HCT116 (cell line): ENCODE measurements at regions of chr7 and their contacts with region 1.

Region 1: DNA sequence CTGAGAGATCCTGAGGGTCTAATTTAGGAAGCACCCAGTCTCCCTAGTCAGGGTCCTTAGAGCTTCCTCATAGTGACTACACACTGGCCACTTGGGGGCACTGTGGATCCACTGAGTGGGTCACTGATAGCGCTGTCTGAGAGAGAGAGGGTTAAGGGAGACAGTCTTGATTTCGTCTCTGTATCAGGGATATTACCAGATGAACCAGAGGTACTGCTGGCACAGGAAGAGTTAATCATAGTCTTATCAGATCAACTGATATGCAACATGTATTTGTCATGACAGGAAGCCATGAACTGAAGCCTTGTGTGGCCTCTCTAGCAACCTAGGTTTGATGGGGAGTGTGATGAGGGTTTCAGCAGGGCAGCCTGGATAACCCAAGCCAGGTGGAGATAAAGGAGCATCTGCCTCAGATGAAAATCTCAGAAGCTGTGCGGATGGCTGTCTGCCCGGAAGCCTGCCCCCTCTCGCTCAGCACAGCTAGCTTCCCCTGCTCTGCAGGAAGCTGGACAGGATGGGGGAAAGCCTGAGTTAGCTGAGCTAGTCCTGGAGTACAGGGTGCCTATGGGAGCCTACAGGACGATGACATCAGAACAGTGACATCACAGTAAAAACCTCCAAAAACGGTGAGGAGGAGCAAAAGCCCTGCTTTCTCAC is 214.0 kb upstream of the PRSS1 start:
- DNase-seq: peak; percentile 76
- ATAC-seq: peak; percentile 100
- H3K4me3 ChIP-seq: no peak overlapping the region
- H3K27ac ChIP-seq: no peak overlapping the region
- H3K4me1 ChIP-seq: peaks cover 3 to 17% of the 10 kb centered on the region in 2 experiments; a peak in 3 of 4 replicates
- H3K27me3 ChIP-seq: no peaks in the 10 kb centered on the region
- CTCF ChIP-seq: peak; percentile 89 to 96 (median 90)
- POLR2A ChIP-seq: no peak
- RAD21 ChIP-seq: peak; percentile 96

Region 2: DNA sequence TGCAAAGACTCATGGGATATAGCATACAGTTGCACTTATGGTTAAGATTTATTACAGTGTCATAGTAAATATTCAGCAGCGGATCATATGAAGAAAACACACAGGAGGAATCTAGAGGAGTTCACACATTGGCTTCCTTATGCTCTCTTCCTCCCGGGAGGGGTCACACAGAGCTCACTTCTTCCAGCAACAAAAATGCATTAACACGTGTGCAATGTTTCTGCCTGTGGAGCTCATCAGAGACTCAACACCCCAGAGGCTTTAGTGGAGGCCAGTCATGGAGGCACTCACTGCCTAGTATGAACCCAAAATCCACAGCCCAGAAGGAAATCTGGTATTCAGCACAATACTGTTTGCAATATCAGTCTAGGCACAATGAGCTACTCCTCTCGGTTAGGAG is 11.2 kb after region 1 on chr7:
- CTCF ChIA-PET with region 1: interaction called, 15 read pairs
- POLR2A ChIA-PET with region 1: no interaction called
- RAD21 ChIA-PET with region 1: no interaction called
- intact Hi-C with region 1: no loop called
- DNase-seq: no peak
- ATAC-seq: no peak
- H3K4me3 ChIP-seq: no peak overlapping the region
- H3K27ac ChIP-seq: no peak overlapping the region
- H3K4me1 ChIP-seq: no peaks in the 10 kb centered on the region
- H3K27me3 ChIP-seq: no peaks in the 10 kb centered on the region
- CTCF ChIP-seq: no peak
- POLR2A ChIP-seq: no peak
- RAD21 ChIP-seq: no peak

Region 3: DNA sequence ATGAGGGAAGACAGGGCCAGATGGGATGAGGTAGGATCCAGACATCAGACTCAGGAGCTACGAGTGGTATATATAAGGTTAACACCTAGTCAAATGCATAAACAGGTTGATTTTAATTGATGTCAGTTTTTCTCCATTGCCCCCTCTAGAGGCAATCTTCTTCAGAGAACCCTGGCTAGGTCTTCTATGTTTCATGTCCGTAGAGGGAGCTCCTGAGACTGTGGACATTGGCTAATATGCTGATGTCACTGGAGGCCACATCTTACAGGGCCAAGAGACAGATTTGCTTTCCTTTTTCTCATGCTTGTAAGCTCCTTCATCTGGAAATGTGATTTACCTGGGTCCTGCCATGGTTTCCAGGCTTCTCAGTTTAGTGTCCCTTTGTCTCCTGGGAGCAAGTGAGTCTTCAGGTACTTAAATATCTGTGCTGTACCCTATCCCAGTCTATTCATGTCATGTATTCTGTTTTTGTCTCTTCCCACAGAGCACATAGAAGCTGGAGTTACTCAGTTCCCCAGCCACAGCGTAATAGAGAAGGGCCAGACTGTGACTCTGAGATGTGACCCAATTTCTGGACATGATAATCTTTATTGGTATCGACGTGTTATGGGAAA is 52.4 kb after region 1 on chr7:
- CTCF ChIA-PET with region 1: interaction called, 58 read pairs
- POLR2A ChIA-PET with region 1: interaction called, 4 read pairs
- RAD21 ChIA-PET with region 1: interaction called, 8 to 9 read pairs
- intact Hi-C with region 1: loop called (anchors 1 kb)
- DNase-seq: peak; percentile 82
- ATAC-seq: peak; percentile 96
- H3K4me3 ChIP-seq: no peak overlapping the region
- H3K27ac ChIP-seq: 0 out of 2 replicates have a peak overlapping the region, but pooled peaks have one; percentile 9
- H3K4me1 ChIP-seq: peaks cover 0 to 23% of the 10 kb centered on the region in 2 experiments; a peak in 3 of 4 replicates
- H3K27me3 ChIP-seq: no peaks in the 10 kb centered on the region
- CTCF ChIP-seq: peak; percentile 86 to 99 (median 89)
- POLR2A ChIP-seq: no peak
- RAD21 ChIP-seq: peak; percentile 56

Region 4: GRCh38 chr7:142632291-142633134 is 97.3 kb after region 1 on chr7:
- CTCF ChIA-PET with region 1: interaction called, 26 read pairs
- POLR2A ChIA-PET with region 1: no interaction called
- RAD21 ChIA-PET with region 1: interaction called, 4 to 5 read pairs
- intact Hi-C with region 1: loop called (anchors 2 kb)
- DNase-seq: peak; percentile 63
- ATAC-seq: peak; percentile 98
- H3K4me3 ChIP-seq: no peak overlapping the region
- H3K27ac ChIP-seq: no peak overlapping the region
- H3K4me1 ChIP-seq: peaks cover 0 to 7% of the 10 kb centered on the region in 2 experiments; a peak in 1 of 4 replicates
- H3K27me3 ChIP-seq: peaks cover 6% of the 10 kb centered on the region; the same call in 1 of the 2 replicates
- CTCF ChIP-seq: peak; percentile 71 to 93 (median 81)
- POLR2A ChIP-seq: no peak
- RAD21 ChIP-seq: peak; percentile 82

Region 5: GRCh38 chr7:142646386-142647140 is 111.3 kb after region 1 on chr7:
- CTCF ChIA-PET with region 1: no interaction called
- POLR2A ChIA-PET with region 1: no interaction called
- RAD21 ChIA-PET with region 1: no interaction called
- intact Hi-C with region 1: no loop called
- DNase-seq: no peak
- ATAC-seq: peak; percentile 50; the same call in 1 of the 2 replicates
- H3K4me3 ChIP-seq: no peak overlapping the region
- H3K27ac ChIP-seq: no peak overlapping the region
- H3K4me1 ChIP-seq: no peaks in the 10 kb centered on the region
- H3K27me3 ChIP-seq: peaks cover 66% of the 10 kb centered on the region
- CTCF ChIP-seq: no peak
- POLR2A ChIP-seq: no peak
- RAD21 ChIP-seq: no peak

Region 6: DNA sequence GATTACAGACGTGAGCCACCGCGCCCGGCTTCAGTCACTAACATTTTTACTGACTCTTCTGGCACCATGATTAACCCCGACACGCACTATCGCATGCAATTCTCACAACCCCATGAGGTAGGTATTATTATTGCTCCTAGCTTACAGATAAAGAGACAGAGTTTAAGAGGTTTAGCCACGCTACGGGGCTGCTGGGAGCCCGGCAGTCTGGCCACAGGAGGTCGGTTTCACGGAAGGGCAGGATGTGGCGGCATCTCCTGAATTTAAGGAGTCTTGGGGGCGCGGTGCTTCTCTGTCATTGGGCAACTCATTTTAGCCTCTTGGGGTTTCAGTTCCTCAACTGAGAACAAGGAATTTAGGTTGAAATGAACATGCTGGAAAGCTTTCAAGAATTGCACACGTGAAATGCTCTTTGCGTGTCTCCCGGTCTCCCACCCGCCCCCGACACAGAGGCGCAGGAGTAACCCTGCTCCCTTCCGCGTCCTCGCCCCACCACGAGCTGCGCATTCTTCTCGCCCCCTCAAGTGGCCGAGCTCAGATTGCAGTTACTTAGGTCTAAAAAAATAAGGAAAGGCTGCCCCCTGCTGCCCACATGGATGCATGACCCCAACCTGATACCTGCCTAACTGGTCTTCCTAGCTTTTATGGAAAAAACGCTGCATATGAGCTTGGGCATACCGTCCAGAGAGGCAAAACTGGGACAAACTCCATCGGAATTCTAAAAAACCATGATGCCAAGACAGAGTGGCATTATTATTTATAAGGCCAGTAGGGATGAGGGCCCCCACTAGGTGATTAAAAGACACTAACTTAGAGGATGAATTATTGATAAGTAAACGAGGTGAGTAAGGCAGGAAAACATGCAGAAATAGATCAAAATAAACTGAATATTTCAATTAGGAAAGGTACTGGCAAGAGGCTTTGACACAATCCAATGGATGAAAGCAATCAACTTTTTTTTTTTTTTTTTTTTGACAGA is 248.0 kb after region 1 on chr7:
- CTCF ChIA-PET with region 1: interaction called, 69 read pairs
- POLR2A ChIA-PET with region 1: interaction called, 5 read pairs
- RAD21 ChIA-PET with region 1: interaction called, 6 to 11 read pairs
- intact Hi-C with region 1: loop called (anchors 1 kb)
- DNase-seq: peak; percentile 89
- ATAC-seq: peak; percentile 91
- H3K4me3 ChIP-seq: peak overlapping the region; percentile 38 to 51
- H3K27ac ChIP-seq: no peak overlapping the region
- H3K4me1 ChIP-seq: peaks cover 0 to 5% of the 10 kb centered on the region in 2 experiments; a peak in 1 of 4 replicates
- H3K27me3 ChIP-seq: no peaks in the 10 kb centered on the region
- CTCF ChIP-seq: peak; percentile 88 to 100 (median 92)
- POLR2A ChIP-seq: no peak
- RAD21 ChIP-seq: peak; percentile 99

Region 7: GRCh38 chr7:143008007-143008901 is 473.0 kb after region 1 on chr7:
- CTCF ChIA-PET with region 1: no interaction called
- POLR2A ChIA-PET with region 1: no interaction called
- RAD21 ChIA-PET with region 1: no interaction called
- intact Hi-C with region 1: loop called (anchors 5 kb)
- DNase-seq: peak; percentile 46
- ATAC-seq: peak; percentile 95
- H3K4me3 ChIP-seq: no peak overlapping the region
- H3K27ac ChIP-seq: no peak overlapping the region
- H3K4me1 ChIP-seq: peaks cover 0 to 1% of the 10 kb centered on the region in 2 experiments; a peak in 1 of 4 replicates
- H3K27me3 ChIP-seq: no peaks in the 10 kb centered on the region
- CTCF ChIP-seq: peak; percentile 91 to 99 (median 91)
- POLR2A ChIP-seq: no peak
- RAD21 ChIP-seq: peak; percentile 98